Transverse colon (tissue), 4 donors: ENCODE measurements at regions of chr4 and their contacts with region 1.

Region 1: DNA sequence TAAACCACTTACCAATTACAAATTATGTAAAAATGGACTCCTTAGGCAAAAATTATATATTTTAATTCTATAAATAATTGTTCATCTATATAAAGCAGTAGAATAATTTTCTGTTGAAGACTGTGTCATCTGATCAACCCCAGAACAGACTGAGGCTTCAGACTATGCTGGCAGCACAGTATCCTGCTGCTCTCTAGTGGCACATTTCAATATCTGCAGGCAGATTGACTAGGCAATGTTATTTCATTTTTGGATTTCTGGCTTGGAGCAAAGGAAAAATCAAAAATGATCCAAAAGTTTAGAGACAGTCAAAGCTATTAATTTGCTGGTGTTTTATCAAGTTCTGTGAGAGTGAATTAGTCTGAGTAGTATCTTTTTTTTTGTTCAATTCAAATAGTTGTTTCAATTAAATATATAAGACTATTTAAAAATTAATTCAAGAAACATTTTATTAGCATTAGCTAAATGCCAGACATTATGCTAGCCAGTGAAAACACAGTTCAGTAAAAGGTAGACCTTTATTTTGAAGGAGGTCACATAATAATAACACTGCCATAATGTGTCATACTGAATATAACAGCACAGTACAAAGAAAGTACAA is 21.3 kb upstream of the SULT1E1 start:
- DNase-seq: peak; percentile 17
- H3K4me3 ChIP-seq: no peak overlapping the region
- H3K27ac ChIP-seq: no peak overlapping the region
- H3K4me1 ChIP-seq: peaks cover 0 to 23% (median 7%) of the 10 kb centered on the region in 4 donors
- H3K27me3 ChIP-seq: no peaks in the 10 kb centered on the region
- CTCF ChIP-seq: peak; percentile 60 to 85 (median 79)
- EP300 ChIP-seq: no peak
- POLR2A ChIP-seq: no peak

Region 2: DNA sequence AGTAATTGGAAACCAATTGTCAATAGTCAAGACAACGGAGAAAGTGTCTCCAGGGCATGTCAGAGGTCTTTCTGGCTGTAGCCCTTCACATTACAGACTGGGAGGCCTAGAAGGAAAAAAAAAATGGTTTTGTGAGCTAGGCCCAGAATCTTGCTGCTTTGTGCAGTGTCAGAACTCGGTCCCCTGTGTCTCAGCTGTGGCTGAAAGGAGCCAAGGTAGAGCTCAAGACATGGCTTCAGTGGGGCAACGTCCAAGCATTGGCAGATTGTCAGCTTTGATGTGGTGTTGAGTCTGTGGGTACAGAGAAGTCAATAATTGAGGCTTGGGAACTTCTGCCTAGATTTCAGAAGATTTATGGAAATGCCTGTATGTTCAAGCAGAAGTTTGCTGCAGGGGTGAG is 498.0 kb before region 1 on chr4:
- in situ Hi-C with region 1: no loop called
- intact Hi-C with region 1: no loop called
- DNase-seq: no peak
- H3K4me3 ChIP-seq: no peak overlapping the region
- H3K27ac ChIP-seq: no peak overlapping the region
- H3K4me1 ChIP-seq: no peaks in the 10 kb centered on the region
- H3K27me3 ChIP-seq: no peaks in the 10 kb centered on the region
- CTCF ChIP-seq: no peak
- EP300 ChIP-seq: no peak
- POLR2A ChIP-seq: no peak

Region 3: DNA sequence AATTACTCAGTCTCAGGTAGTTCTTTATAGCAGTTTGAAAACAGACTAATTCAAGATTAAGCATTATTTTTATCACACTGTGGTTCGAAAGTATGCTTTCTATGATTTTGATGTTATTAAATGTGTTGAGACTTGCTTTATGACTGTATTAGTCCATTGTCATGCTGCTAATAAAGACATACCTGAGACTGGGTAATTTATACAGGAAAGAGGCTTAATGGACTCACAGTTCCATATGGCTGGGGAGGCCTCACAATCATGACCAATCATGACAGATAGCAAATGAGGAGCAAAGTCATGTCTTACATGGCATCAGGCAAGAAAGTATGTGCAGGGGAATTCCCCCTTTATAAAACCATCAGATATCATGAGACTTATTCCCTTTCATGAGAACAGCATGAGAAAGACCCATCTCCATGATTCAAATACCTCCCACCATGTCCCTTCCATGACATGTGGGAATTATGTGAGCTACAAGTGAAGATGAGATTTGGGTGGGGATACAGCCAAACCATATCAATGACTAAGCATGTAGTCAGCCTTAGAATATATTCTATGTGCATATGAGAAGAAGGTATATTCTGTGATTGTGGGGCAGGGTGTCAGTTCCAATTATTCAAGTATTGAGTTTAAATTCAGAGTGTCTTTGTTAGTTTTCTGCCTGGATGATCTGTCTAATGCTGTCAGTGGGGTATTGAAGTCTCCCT is 183.6 kb before region 1 on chr4:
- in situ Hi-C with region 1: loop called in 3 of 4 experiments (anchors 10 to 25 kb)
- intact Hi-C with region 1: no loop called
- DNase-seq: no peak
- H3K4me3 ChIP-seq: no peak overlapping the region
- H3K27ac ChIP-seq: no peak overlapping the region
- H3K4me1 ChIP-seq: no peaks in the 10 kb centered on the region
- H3K27me3 ChIP-seq: no peaks in the 10 kb centered on the region
- CTCF ChIP-seq: no peak
- EP300 ChIP-seq: no peak
- POLR2A ChIP-seq: no peak